Mammary epithelial cell (primary cell): ENCODE measurements at regions of chr4 and their contacts with region 1.

Region 1: GRCh38 chr4:68466185-68466584 is 18.9 kb downstream of the TMPRSS11E start:
- DNase-seq: peak; percentile 90
- H3K4me3 ChIP-seq: no peak overlapping the region
- H3K27ac ChIP-seq: peak overlapping the region; percentile 62
- H3K4me1 ChIP-seq: peaks cover 56% of the 10 kb centered on the region
- H3K27me3 ChIP-seq: no peaks in the 10 kb centered on the region
- CTCF ChIP-seq: no peak

Region 2: DNA sequence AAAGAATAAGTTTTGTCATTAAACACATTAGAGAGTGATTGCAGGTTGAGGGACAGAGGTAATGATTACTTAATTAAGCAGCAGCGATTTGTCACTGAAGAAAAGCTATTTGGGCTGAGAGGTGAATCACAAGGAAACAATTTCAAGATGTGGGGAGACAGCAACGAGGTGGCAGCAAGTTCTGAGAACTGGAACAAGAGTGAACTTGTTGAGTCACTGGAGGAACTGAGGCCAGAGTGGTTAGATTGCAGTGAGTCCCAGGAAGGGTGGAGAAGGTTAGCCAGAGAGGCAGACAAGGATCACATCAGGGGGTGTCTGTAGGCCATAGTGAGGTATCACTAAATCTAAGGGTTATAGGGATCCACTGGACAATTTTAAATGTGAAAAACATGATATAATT is 445.0 kb before region 1 on chr4:
- CTCF ChIA-PET with region 1: no interaction called
- dilution Hi-C with region 1: no loop called
- in situ Hi-C with region 1: no loop called
- intact Hi-C with region 1: no loop called
- DNase-seq: peak; percentile 81
- H3K4me3 ChIP-seq: no peak overlapping the region
- H3K27ac ChIP-seq: no peak overlapping the region
- H3K4me1 ChIP-seq: peaks cover 12% of the 10 kb centered on the region
- H3K27me3 ChIP-seq: no peaks in the 10 kb centered on the region
- CTCF ChIP-seq: no peak

Region 3: DNA sequence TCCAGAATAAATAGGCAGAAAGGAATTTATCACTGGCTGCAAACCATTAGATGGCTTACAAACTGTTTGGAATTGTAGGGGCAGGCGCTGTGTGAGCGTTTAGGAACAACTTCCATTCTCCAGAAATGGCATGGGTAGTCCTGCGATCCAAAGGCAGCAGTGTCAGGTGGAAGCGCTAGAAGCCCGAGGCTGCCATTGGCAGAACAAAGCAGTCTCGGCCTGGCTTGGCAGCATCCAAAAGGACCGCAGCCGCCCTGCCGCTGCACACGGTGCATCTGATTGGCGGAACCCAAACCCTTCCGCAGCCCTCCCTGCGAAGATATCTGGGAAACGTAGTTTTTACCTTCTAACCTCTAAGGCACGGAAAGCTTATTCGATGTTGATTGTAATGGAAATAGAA is 92.7 kb before region 1 on chr4:
- CTCF ChIA-PET with region 1: no interaction called
- dilution Hi-C with region 1: no loop called
- in situ Hi-C with region 1: no loop called
- intact Hi-C with region 1: no loop called
- DNase-seq: no peak
- H3K4me3 ChIP-seq: peak overlapping the region in 1 of 3 experiments; percentile 4
- H3K27ac ChIP-seq: no peak overlapping the region
- H3K4me1 ChIP-seq: peaks cover 27% of the 10 kb centered on the region
- H3K27me3 ChIP-seq: no peaks in the 10 kb centered on the region
- CTCF ChIP-seq: no peak

Region 4: DNA sequence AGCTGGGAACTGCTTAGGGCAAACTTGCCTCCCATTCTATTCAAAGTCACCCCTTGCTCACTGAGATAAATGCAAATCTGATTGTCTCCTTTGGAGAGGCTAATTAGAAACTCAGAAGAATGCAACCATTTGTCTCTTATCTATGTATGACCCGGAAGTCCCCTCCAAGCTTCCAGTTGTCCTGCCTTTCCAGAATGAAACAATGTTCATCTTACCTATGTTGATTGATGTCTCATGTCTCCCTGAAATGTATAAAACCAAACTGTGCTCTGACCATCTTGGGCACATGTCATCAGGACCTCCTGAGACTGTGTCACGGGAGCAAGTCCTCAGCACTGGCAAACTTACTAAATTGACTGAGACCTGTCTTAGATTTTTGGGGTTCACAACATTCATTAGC is 56.0 kb before region 1 on chr4:
- CTCF ChIA-PET with region 1: no interaction called
- dilution Hi-C with region 1: no loop called
- in situ Hi-C with region 1: no loop called
- intact Hi-C with region 1: loop called (anchors 5 kb)
- DNase-seq: no peak
- H3K4me3 ChIP-seq: no peak overlapping the region
- H3K27ac ChIP-seq: no peak overlapping the region
- H3K4me1 ChIP-seq: peaks cover 9% of the 10 kb centered on the region
- H3K27me3 ChIP-seq: no peaks in the 10 kb centered on the region
- CTCF ChIP-seq: no peak

Region 5: GRCh38 chr4:68451246-68452211 is 14.7 kb before region 1 on chr4:
- CTCF ChIA-PET with region 1: no interaction called
- dilution Hi-C with region 1: no loop called
- in situ Hi-C with region 1: no loop called
- intact Hi-C with region 1: loop called (anchors 1 kb)
- DNase-seq: peak; percentile 77
- H3K4me3 ChIP-seq: no peak overlapping the region
- H3K27ac ChIP-seq: peak overlapping the region; percentile 60
- H3K4me1 ChIP-seq: peaks cover 40% of the 10 kb centered on the region
- H3K27me3 ChIP-seq: no peaks in the 10 kb centered on the region
- CTCF ChIP-seq: no peak

Region 6: GRCh38 chr4:68535974-68536373 is 69.8 kb after region 1 on chr4:
- CTCF ChIA-PET with region 1: no interaction called
- dilution Hi-C with region 1: no loop called
- in situ Hi-C with region 1: no loop called
- intact Hi-C with region 1: no loop called
- DNase-seq: no peak
- H3K4me3 ChIP-seq: no peak overlapping the region
- H3K27ac ChIP-seq: no peak overlapping the region
- H3K4me1 ChIP-seq: no peaks in the 10 kb centered on the region
- H3K27me3 ChIP-seq: no peaks in the 10 kb centered on the region
- CTCF ChIP-seq: no peak

Region 7: GRCh38 chr4:69167300-69167699 is 701.1 kb after region 1 on chr4:
- CTCF ChIA-PET with region 1: no interaction called
- dilution Hi-C with region 1: no loop called
- in situ Hi-C with region 1: no loop called
- intact Hi-C with region 1: no loop called
- DNase-seq: peak; percentile 2
- H3K4me3 ChIP-seq: no peak overlapping the region
- H3K27ac ChIP-seq: no peak overlapping the region
- H3K4me1 ChIP-seq: no peaks in the 10 kb centered on the region
- H3K27me3 ChIP-seq: peaks cover 2% of the 10 kb centered on the region
- CTCF ChIP-seq: no peak